Activated CD8-positive, alpha-beta T cell treated with anti-CD3 and anti-CD28 coated beads, Interleukin-2, amount 10 ng/mL, durations not matched to agents 7 days and 5 days (primary cell): ENCODE measurements at regions of chr3 and their contacts with region 1.

Region 1: GRCh38 chr3:42526616-42527367 is 24.3 kb downstream of the VIPR1 start:
- DNase-seq: peak; percentile 59
- ATAC-seq: peak; percentile 84
- H3K4me3 Mint-ChIP-seq: peak overlapping the region; percentile 50
- H3K27ac Mint-ChIP-seq: peak overlapping the region; percentile 92
- H3K4me1 Mint-ChIP-seq: peaks cover 56% of the 10 kb centered on the region
- H3K27me3 Mint-ChIP-seq: no peaks in the 10 kb centered on the region

Region 2: DNA sequence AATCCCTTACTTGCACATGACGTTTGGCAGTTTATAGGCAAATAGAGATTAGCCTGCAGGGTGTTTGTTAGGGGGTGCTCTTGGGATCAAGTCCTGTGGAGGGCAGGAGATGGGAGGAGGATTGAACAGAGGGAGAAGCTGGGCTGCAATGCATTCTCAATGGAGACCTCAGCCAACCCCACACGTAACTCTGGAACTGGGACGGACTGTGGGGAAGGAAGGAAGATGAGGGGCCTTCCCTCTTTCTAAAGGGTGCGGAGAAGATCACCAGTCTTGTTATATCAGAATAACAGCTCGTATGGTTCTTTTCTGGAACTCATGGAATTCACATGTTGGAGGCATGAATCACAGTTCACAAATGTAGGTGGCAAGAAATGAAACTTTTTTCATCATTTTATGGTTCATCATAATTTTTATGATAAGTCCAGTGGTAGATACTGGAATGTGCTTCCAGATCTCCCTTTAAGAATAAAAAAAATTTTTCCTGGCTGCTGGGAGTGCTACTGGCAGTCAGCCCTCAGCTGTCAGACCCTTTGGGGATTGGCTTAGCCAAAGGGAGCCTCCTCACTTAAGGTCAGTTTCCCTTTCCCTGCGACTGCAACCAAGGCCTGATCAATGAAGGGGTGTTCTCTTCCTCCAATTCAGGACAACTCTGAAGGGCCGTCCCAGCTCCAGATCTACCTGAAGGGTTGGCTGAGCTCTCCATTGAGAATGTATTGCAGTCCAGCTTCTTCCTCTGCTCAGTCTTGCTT is 95.8 kb before region 1 on chr3:
- CTCF ChIA-PET with region 1: no interaction called
- POLR2A ChIA-PET with region 1: no interaction called
- DNase-seq: no peak
- ATAC-seq: no peak
- H3K4me3 Mint-ChIP-seq: no peak overlapping the region
- H3K27ac Mint-ChIP-seq: no peak overlapping the region
- H3K4me1 Mint-ChIP-seq: no peaks in the 10 kb centered on the region
- H3K27me3 Mint-ChIP-seq: peaks cover 6% of the 10 kb centered on the region

Region 3: GRCh38 chr3:42502429-42503250 is 24.2 kb before region 1 on chr3 and contains the start of gene VIPR1:
- CTCF ChIA-PET with region 1: interaction called, 13 read pairs
- POLR2A ChIA-PET with region 1: interaction called, 4 read pairs
- DNase-seq: peak; percentile 91
- ATAC-seq: peak; percentile 97
- H3K4me3 Mint-ChIP-seq: peak within 1 kb of the TSS; percentile 86
- H3K27ac Mint-ChIP-seq: peak within 1 kb of the TSS; percentile 41
- H3K4me1 Mint-ChIP-seq: peaks cover 35% of the 10 kb centered on the region
- H3K27me3 Mint-ChIP-seq: peaks cover 28% of the 10 kb centered on the region
- total RNA-seq, gene VIPR1: 9.1 to 9.5 TPM